GM12878 (cell line): ENCODE measurements at regions of chr17 and their contacts with region 1.

Region 1: GRCh38 chr17:67569873-67570272 is 147.9 kb upstream of the NOL11 start:
- DNase-seq: peak; percentile 57
- ATAC-seq: peak; percentile 49
- H3K4me3 ChIP-seq: peak overlapping the region; percentile 57
- H3K27ac ChIP-seq: peak overlapping the region; percentile 88
- H3K4me1 ChIP-seq: peaks cover 60% of the 10 kb centered on the region
- H3K27me3 ChIP-seq: no peaks in the 10 kb centered on the region
- CTCF ChIP-seq: no peak
- EP300 ChIP-seq: peak; percentile 58 to 69; a peak in 2 of 4 replicates
- POLR2A ChIP-seq: no peak
- RAD21 ChIP-seq: no peak

Region 2: GRCh38 chr17:67584991-67585602 is 15.2 kb after region 1 on chr17:
- CTCF ChIA-PET with region 1: interaction called, 23 read pairs
- POLR2A ChIA-PET with region 1: interaction called, 22 read pairs
- RAD21 ChIA-PET with region 1: interaction called, 5 read pairs
- SMC1A ChIA-PET with region 1: interaction called, 26 read pairs
- in situ Hi-C with region 1: no loop called
- intact Hi-C with region 1: no loop called
- DNase-seq: no peak
- ATAC-seq: no peak
- H3K4me3 ChIP-seq: no peak overlapping the region
- H3K27ac ChIP-seq: no peak overlapping the region
- H3K4me1 ChIP-seq: peaks cover 14% of the 10 kb centered on the region
- H3K27me3 ChIP-seq: no peaks in the 10 kb centered on the region; a peak in 1 of 4 replicates
- CTCF ChIP-seq: no peak
- EP300 ChIP-seq: no peak
- POLR2A ChIP-seq: no peak
- RAD21 ChIP-seq: no peak

Region 3: DNA sequence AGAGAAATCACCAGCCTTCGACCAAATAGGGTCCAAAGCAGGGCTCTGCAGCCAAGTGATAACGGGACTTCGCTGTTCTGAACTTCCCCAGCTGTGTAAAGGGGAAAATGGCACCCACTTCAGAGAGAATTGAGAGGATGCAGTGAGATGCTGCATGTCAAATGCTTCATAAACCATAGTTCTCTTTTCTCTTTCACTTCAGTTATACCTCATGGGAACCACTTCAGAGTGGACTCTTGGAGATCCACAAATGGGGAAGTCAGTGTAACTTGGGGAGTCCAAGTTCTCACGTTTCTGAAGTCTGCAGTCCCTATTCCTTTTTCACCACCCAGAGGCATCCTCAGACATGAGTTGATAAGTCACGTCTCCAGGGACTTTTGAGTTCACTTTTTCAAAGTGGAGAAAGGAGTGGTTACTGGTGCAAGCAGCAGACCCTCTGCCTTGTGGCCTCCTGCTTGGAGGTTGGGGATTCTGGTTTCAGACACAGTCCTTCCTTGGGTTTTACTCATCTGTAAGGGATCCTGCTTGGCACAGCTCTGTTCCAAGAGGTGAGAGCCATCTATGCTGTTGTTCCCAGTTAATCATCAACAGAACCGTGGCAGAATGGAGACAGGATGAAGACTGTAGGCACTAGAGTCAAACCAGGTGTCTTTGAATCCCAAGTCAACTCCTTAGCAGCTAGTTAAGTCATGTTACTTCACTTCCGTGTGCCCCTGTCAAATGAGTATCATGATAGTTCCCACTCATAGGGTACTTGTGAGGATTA is 24.4 kb after region 1 on chr17:
- CTCF ChIA-PET with region 1: interaction called, 47 read pairs
- POLR2A ChIA-PET with region 1: interaction called, 27 read pairs
- RAD21 ChIA-PET with region 1: interaction called, 80 read pairs
- SMC1A ChIA-PET with region 1: interaction called, 62 read pairs
- in situ Hi-C with region 1: no loop called
- intact Hi-C with region 1: no loop called
- DNase-seq: peak; percentile 82
- ATAC-seq: peak; percentile 88
- H3K4me3 ChIP-seq: no peak overlapping the region
- H3K27ac ChIP-seq: peak overlapping the region; percentile 82
- H3K4me1 ChIP-seq: peaks cover 20% of the 10 kb centered on the region
- H3K27me3 ChIP-seq: no peaks in the 10 kb centered on the region
- CTCF ChIP-seq: no peak
- EP300 ChIP-seq: peak; percentile 5 to 6; a peak in 1 of 4 replicates
- POLR2A ChIP-seq: no peak
- RAD21 ChIP-seq: peak; percentile 39; the same call in 1 of the 2 replicates

Region 4: GRCh38 chr17:67855504-67856324 is 285.8 kb after region 1 on chr17:
- CTCF ChIA-PET with region 1: no interaction called
- POLR2A ChIA-PET with region 1: no interaction called
- RAD21 ChIA-PET with region 1: no interaction called
- SMC1A ChIA-PET with region 1: no interaction called
- in situ Hi-C with region 1: no loop called
- intact Hi-C with region 1: no loop called
- DNase-seq: no peak
- ATAC-seq: peak; percentile 80
- H3K4me3 ChIP-seq: peak overlapping the region; percentile 42
- H3K27ac ChIP-seq: peak overlapping the region; percentile 65
- H3K4me1 ChIP-seq: peaks cover 7% of the 10 kb centered on the region
- H3K27me3 ChIP-seq: no peaks in the 10 kb centered on the region
- CTCF ChIP-seq: no peak
- EP300 ChIP-seq: no peak
- POLR2A ChIP-seq: no peak
- RAD21 ChIP-seq: no peak